ENCODE measurements at regions of chr11 and their contacts with region 1.

Region 1: DNA sequence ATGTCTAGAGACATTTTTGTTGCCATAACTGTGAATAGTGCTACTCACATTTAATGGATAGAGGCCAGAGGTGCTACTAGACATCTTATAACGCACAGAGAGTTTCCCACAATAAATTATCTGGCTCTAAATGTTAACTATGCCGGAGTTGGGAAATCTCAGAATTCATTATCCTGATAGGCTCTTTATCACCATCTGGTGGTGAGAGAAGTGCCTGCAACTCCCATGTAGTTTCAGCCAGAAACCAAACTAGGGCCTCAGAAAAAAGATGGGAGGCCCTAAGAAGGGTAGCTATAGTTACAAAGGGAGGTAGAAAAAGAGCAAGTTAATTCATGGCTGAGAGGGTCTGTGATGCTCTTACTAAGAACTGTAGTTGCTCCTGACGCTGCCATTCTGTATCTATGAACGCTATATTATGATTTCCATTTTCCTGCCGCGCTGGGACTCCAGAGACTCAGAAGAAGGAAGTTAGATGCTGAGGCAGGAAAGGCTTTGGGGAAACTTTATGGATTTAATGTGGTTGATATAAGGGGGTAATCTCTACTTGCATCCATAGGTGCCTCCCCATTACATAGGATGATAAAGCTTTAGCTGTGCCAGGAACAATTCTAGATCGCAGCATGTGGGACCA is 22.9 kb upstream of the MRPL17 start:
- DNase-seq: peak; percentile 39 to 45
- ATAC-seq: peak; percentile 68 to 76; a peak in 5 of 6 replicates
- H3K4me3 ChIP-seq: no peak overlapping the region
- H3K27ac ChIP-seq: no peak overlapping the region
- H3K4me1 ChIP-seq: no peaks in the 10 kb centered on the region
- CTCF ChIP-seq: peak; percentile 76
- EP300 ChIP-seq: no peak
- POLR2A ChIP-seq: no peak
- RAD21 ChIP-seq: peak; percentile 60 to 62

Region 2: DNA sequence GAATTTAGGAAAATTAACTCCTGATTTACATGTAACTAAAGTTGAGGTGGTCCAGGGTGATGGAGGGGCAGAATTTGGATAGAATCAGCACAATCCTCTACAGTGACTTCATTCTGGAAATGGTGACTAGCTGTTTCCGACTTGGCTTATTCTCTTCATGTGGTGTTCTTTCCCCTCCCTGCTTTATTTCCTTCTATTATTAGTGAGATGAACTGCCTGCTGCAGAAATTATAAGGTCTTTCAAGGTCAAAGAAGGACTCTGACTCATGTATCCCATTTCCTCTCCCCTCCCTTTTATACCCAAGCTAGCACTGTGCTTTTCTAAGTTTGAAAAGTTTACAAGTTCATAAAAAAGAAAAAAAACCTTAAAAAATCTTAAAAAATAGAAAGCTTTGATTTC is 10.6 kb before region 1 on chr11:
- CTCF ChIA-PET with region 1: interaction called, 16 read pairs
- POLR2A ChIA-PET with region 1: no interaction called
- DNase-seq: no peak
- ATAC-seq: no peak
- H3K4me3 ChIP-seq: no peak overlapping the region
- H3K27ac ChIP-seq: no peak overlapping the region
- H3K4me1 ChIP-seq: no peaks in the 10 kb centered on the region
- CTCF ChIP-seq: no peak
- EP300 ChIP-seq: no peak
- POLR2A ChIP-seq: no peak
- RAD21 ChIP-seq: no peak